ENCODE measurements at regions of chr5 and their contacts with region 1.

Region 1: DNA sequence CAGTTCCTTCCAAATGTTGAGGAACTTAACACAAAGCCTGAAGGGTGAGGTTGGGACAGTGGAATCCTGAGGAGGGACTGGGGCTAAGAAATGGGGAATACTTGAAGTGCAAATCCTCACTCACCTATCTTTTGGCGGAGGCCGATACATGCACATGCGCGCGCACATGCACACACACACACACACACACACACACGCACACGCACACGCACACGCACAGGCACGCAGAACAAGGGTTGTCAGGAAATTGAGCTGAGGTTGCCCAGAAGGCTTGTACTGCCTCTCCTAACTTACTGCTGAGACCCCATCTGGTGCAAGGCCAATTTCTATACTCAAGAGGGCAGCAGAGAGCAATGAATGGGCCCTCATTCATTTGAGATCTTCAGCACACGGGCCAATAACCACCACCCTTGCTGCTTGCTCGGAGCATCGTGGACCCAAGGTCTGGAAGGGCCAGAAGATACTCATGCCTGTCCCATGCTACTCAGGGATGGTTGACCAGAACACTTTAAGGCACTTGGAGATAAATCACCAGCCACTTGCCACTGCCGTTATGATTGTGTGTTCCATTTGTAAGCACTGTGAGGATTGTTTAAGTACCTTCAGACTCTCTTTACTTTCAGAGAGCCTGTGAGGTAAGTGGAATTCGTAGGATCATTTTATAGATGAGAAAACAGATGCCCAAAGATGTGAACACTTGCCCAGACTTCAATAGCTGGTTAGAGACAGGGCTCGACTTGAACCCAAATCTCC is 21.5 kb downstream of the BTF3 start:
- DNase-seq: peak; percentile 93
- H3K4me3 Mint-ChIP-seq: peak overlapping the region; percentile 34
- H3K27ac Mint-ChIP-seq: no peak overlapping the region
- H3K4me1 Mint-ChIP-seq: peaks cover 8% of the 10 kb centered on the region
- H3K27me3 Mint-ChIP-seq: no peaks in the 10 kb centered on the region

Region 2: GRCh38 chr5:73498057-73499008 is 21.4 kb before region 1 on chr5 and contains the start of gene BTF3:
- intact Hi-C with region 1: loop called (anchors 2 kb)
- DNase-seq: peak; percentile 98
- H3K4me3 Mint-ChIP-seq: peak within 1 kb of the TSS; percentile 99
- H3K27ac Mint-ChIP-seq: peak within 1 kb of the TSS; percentile 100
- H3K4me1 Mint-ChIP-seq: peaks cover 30% of the 10 kb centered on the region
- H3K27me3 Mint-ChIP-seq: peaks cover 12% of the 10 kb centered on the region
- total RNA-seq, gene BTF3: 960 and 998 TPM in 2 replicates

Region 3: DNA sequence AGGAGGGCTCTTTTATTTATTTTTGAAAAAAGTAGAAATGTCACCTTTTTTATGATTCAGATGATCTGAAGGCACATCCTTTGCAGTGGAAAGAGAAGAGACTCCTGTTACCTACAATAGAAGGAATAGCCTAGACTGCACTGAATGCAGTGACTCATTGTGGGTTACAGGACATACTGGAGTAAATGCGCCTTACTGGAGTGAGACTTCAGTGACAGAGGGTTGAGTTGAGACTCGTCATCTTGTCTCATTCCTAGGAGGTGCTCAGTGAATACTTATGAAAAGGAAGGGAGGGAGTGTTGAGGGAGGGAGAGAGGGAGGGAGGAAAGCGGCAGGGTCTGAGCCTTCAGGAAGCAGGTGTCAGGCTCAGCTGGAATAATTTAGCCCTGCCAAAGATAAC is 20.5 kb after region 1 on chr5:
- intact Hi-C with region 1: loop called (anchors 1 kb)
- DNase-seq: peak; percentile 30
- H3K4me3 Mint-ChIP-seq: no peak overlapping the region
- H3K27ac Mint-ChIP-seq: no peak overlapping the region
- H3K4me1 Mint-ChIP-seq: peaks cover 11% of the 10 kb centered on the region
- H3K27me3 Mint-ChIP-seq: peaks cover 10% of the 10 kb centered on the region

Region 4: DNA sequence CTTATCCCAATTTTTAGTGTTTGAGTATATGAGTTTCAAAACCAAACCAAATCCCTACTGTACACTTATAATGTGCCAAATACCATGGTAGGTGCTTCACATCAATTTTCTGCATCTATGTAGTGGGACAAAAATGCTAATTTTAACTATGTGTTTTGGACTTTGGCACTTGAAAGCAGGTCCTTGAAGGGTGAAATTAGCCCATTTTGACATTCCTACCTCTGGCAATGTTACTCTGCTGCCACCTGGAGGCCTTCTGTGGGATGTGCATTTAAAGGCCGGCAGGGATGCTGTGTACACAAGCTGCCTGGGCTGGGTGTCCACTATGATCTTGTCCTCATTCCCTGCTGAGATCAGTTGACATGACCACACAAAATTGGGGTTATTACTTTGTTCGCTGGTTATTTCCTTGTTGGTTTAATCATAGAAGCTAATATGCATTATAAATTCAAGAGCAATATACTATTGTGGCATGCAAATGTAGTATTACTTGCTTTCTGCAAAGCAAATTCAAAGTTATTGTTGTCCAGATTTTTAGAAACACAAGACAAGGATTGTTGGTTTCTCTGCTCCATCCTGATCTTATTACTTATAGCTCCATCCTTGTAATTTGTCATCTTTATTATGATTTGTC is 273.1 kb after region 1 on chr5:
- intact Hi-C with region 1: loop called (anchors 1 kb)
- DNase-seq: peak; percentile 88
- H3K4me3 Mint-ChIP-seq: no peak overlapping the region
- H3K27ac Mint-ChIP-seq: no peak overlapping the region
- H3K4me1 Mint-ChIP-seq: peaks cover 6% of the 10 kb centered on the region
- H3K27me3 Mint-ChIP-seq: peaks cover 24% of the 10 kb centered on the region